K562 (cell line): ENCODE measurements at regions of chr16 and their contacts with region 1.

Region 1: DNA sequence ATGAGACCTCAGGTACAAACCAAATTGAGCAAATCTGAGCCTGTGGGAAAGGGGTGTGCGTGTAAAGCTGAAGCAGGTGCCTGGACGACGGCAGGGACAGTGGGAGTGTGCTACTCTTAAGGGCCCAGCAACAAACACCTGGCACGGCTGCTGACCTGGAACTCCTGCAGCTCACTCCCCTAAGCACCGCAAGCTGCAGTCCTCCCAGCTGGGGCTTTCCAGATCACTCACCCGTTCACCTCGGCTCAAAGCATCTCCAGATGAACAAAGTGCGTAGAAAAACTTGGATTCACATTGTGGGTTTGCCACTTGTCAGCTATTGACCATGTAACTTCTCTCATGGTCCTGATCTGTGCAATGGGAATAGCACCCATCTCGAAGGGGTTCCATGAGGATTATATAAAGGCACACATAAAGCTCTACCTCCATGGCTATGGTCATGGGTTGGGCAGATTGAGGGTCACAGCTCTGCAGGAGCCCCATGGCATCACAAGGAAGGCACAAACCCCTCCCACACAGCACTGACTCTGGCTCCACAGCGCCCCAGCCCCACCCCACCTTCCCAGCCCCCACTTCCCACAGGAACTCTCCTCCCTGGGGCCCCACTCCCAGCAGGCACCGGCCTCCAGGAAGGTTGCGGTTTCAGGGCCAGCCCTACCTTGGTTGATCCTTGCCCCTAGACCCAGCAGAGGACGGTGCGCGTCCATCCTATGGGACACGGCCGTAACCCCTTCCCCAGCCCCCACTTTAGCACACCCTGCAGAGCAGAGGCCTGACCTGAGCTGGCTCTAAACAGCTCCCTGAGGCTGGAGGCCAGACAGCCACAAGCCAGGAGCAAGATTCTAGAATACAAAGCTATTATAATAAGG is 21.9 kb downstream of the ST3GAL2 start:
- DNase-seq: peak in 2 of 4 experiments; percentile 31 to 42
- ATAC-seq: peak; percentile 3; the same call in 1 of the 3 replicates
- H3K4me3 ChIP-seq: no peak overlapping the region
- H3K27ac ChIP-seq: no peak overlapping the region; the same call in 2 of the 3 replicates
- H3K4me1 ChIP-seq: peaks cover 79 to 80% of the 10 kb centered on the region in 2 experiments
- H3K27me3 ChIP-seq: no peaks in the 10 kb centered on the region
- CTCF ChIP-seq: no peak
- EP300 ChIP-seq: no peak
- POLR2A ChIP-seq: no peak
- RAD21 ChIP-seq: 0 out of 4 replicates have a peak, but pooled peaks of 1 of the 2 experiments have one; percentile 8

Region 2: DNA sequence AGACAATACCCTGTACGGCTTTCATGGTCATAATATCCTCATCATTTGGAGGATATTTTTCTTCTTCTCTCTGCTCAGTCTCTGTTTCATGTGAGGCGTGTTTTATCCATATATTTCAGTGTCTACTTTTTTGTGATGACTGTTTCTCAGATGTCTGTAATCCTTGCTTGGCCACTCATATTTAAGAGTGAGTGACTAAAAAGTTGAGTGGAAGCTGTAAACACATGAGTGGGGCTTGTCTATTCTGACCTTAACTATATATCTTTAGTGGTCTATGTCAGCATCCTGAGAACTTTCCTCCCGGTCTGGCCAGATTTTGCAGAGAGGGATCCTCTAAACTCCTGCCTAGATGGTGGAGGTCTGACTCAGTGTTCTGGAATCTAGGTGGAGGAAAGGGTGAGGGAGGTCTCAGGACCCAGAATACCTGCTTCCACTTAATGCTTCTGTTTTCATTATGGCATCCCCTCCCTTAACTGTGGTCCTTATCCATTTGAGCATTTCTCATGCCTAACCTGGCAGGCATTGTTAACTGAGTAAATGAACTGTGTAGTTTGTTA is 112.0 kb before region 1 on chr16:
- CTCF ChIA-PET with region 1: no interaction called
- POLR2A ChIA-PET with region 1: no interaction called
- in situ Hi-C with region 1: no loop called
- intact Hi-C with region 1: no loop called
- DNase-seq: no peak
- ATAC-seq: no peak
- H3K4me3 ChIP-seq: no peak overlapping the region
- H3K27ac ChIP-seq: no peak overlapping the region
- H3K4me1 ChIP-seq: no peaks in the 10 kb centered on the region
- H3K27me3 ChIP-seq: no peaks in the 10 kb centered on the region
- CTCF ChIP-seq: no peak
- EP300 ChIP-seq: no peak
- POLR2A ChIP-seq: no peak
- RAD21 ChIP-seq: no peak

Region 3: GRCh38 chr16:70428178-70428998 is 11.4 kb after region 1 on chr16:
- CTCF ChIA-PET with region 1: no interaction called
- POLR2A ChIA-PET with region 1: interaction called, 14 read pairs
- in situ Hi-C with region 1: no loop called
- intact Hi-C with region 1: loop called (anchors 1 kb)
- DNase-seq: peak; percentile 90 to 99 (median 93)
- ATAC-seq: peak; percentile 83
- H3K4me3 ChIP-seq: no peak overlapping the region; the same call in 1 of the 2 replicates
- H3K27ac ChIP-seq: peak overlapping the region; percentile 98
- H3K4me1 ChIP-seq: peaks cover 75 to 78% of the 10 kb centered on the region in 2 experiments
- H3K27me3 ChIP-seq: no peaks in the 10 kb centered on the region
- CTCF ChIP-seq: no peak
- EP300 ChIP-seq: peak; percentile 100
- POLR2A ChIP-seq: peak; percentile 85
- RAD21 ChIP-seq: peak; percentile 41 to 50; a peak in 3 of 4 replicates

Region 4: DNA sequence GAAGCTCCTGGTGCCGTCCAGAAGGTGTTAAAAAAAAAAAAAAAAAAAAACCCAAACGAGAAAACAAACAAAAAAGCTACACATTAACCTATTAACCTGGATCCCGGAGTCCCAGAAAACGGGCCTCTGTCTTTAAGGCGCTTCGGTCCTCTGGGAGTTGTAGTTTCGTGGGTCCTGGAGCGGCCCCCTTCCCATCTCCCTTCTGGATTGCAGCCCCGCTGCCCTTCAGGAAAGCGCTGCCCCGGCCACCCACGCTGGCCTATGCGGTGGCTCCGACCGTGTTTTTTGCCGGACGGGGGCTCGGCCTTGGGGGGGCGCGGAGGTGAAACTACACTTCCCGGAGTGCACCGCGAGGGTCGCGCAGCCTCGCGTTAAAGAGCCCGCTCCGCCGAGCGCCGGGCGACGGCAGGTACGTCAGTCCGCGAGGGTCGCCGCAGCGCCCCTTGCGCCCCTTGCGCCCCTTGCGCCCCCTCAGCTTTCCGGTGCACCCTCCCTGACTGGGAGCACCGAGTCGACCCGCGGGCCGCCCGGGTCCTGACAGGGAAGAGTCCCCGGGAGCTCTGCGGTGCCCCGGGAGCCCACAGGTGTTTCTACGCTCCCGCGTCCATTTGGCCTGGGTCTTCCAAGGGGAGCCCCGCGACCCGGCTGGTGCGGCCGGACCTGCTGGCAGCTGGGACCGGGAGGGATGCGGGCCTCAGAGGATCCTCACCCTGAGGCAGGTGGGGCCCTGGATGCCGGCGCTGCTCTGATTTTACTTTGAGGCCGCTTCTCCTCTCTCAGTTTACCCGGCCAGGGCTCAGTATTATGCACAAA is 37.4 kb after region 1 on chr16 and contains the start of gene FCSK:
- CTCF ChIA-PET with region 1: no interaction called
- POLR2A ChIA-PET with region 1: interaction called, 6 read pairs
- in situ Hi-C with region 1: no loop called
- intact Hi-C with region 1: loop called (anchors 5 kb)
- DNase-seq: peak; percentile 80 to 84 (median 83)
- ATAC-seq: peak; percentile 93
- H3K4me3 ChIP-seq: peak within 1 kb of the TSS; percentile 95
- H3K27ac ChIP-seq: peak within 1 kb of the TSS; percentile 97
- H3K4me1 ChIP-seq: peaks cover 10 to 23% of the 10 kb centered on the region in 2 experiments; a peak in 4 of 5 replicates
- H3K27me3 ChIP-seq: no peaks in the 10 kb centered on the region
- CTCF ChIP-seq: peak in 1 of 3 experiments; percentile 29; a peak in 1 of 6 replicates
- EP300 ChIP-seq: no peak; the same call in 1 of the 2 replicates
- POLR2A ChIP-seq: peak; percentile 28; the same call in 1 of the 2 replicates
- RAD21 ChIP-seq: peak in 1 of 2 experiments; percentile 19; a peak in 1 of 4 replicates
- polyA plus RNA-seq, gene FCSK: 0.92 to 1.1 TPM